Activated CD4-positive, alpha-beta T cell treated with anti-CD3 and anti-CD28 coated beads for 36 hours (primary cell): ENCODE measurements at regions of chr2 and their contacts with region 1.

Region 1: DNA sequence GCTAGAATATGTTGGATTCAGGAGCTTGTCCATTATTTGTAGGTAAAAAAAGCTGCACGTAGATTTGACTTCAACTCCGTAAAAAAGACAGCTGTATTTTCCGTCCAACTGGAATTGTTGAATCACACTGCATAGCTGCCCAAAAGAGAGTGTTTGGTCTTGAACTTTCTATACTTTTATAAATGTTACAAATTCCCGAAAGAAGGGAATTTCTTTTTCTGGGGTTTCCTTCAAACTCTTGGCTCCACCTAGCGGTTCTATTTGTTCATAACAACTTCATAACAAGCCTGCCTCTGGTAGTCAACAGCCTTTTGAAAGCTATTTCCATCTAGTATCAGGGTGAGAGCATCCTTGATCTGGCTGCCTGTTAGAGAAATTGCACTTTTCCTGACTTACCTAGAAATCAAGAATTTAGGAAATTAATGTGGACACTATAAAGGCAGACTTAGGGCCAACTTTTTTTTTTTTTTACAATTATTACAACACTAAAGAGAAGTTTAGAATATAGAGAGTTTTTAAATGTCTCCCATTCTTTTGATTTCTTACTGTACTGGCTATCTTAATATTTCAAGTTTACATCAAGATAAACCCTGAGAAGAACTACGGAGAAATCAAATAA is 48.1 kb downstream of the TMEM185B start:
- DNase-seq: no peak
- ATAC-seq: no peak
- H3K4me3 Mint-ChIP-seq: no peak overlapping the region
- H3K27ac Mint-ChIP-seq: peak overlapping the region; percentile 61
- H3K4me1 Mint-ChIP-seq: peaks cover 44% of the 10 kb centered on the region
- H3K27me3 Mint-ChIP-seq: no peaks in the 10 kb centered on the region

Region 2: DNA sequence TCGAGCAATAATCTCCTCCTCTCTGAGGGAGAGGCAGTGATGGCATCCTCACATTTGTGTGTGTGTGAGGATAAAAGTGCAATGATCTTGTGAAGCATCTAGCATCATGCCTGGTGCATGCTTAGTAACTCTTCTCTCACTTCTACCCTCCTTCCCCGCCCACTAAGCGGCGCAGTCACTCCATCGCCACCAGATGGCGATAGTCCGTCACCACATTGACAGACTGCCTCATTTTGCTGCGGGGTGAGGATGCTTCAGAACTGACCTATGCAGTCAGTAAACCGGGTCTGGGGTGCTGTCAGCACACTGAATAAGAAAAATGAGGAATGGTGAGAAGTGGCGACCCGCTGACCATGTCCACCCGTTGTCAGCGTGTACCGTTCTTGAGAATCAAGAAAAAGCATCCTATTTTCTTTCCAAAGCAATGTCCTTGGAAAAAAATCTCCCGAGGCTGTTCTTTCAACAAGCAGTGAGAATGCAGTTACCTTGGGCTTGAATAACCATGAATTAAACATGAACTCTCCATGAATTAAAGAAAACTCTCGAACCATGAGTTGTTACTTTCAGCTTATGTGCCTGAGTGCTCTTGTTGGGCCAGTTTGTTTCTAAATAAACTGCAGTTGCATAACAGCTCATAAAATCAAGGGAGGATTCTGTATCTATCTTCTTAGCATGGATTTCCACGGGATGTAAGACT is 533.4 kb before region 1 on chr2:
- CTCF ChIA-PET with region 1: interaction called, 40 read pairs
- POLR2A ChIA-PET with region 1: no interaction called
- intact Hi-C with region 1: loop called (anchors 1 kb)
- DNase-seq: peak; percentile 87
- ATAC-seq: peak; percentile 99
- H3K4me3 Mint-ChIP-seq: no peak overlapping the region
- H3K27ac Mint-ChIP-seq: no peak overlapping the region
- H3K4me1 Mint-ChIP-seq: peaks cover 2% of the 10 kb centered on the region
- H3K27me3 Mint-ChIP-seq: no peaks in the 10 kb centered on the region

Region 3: GRCh38 chr2:119753041-119753929 is 421.8 kb before region 1 on chr2:
- CTCF ChIA-PET with region 1: interaction called, 13 read pairs
- POLR2A ChIA-PET with region 1: interaction called, 9 read pairs
- intact Hi-C with region 1: loop called (anchors 1 kb)
- DNase-seq: peak; percentile 32
- ATAC-seq: peak; percentile 65
- H3K4me3 Mint-ChIP-seq: no peak overlapping the region
- H3K27ac Mint-ChIP-seq: no peak overlapping the region
- H3K4me1 Mint-ChIP-seq: peaks cover 15% of the 10 kb centered on the region
- H3K27me3 Mint-ChIP-seq: no peaks in the 10 kb centered on the region

Region 4: GRCh38 chr2:120012771-120013596 is 162.1 kb before region 1 on chr2 and contains the start of gene EPB41L5:
- CTCF ChIA-PET with region 1: interaction called, 11 read pairs
- POLR2A ChIA-PET with region 1: no interaction called
- intact Hi-C with region 1: loop called (anchors 1 to 5 kb)
- DNase-seq: peak; percentile 90
- ATAC-seq: peak; percentile 95
- H3K4me3 Mint-ChIP-seq: peak within 1 kb of the TSS; percentile 73
- H3K27ac Mint-ChIP-seq: peak within 1 kb of the TSS; percentile 66
- H3K4me1 Mint-ChIP-seq: peaks cover 19% of the 10 kb centered on the region
- H3K27me3 Mint-ChIP-seq: no peaks in the 10 kb centered on the region
- total RNA-seq, gene EPB41L5: 2.2 to 2.4 TPM

Region 5: GRCh38 chr2:120150040-120150482 is 25.0 kb before region 1 on chr2:
- CTCF ChIA-PET with region 1: interaction called, 12 read pairs
- POLR2A ChIA-PET with region 1: no interaction called
- intact Hi-C with region 1: no loop called
- DNase-seq: no peak
- ATAC-seq: no peak
- H3K4me3 Mint-ChIP-seq: no peak overlapping the region
- H3K27ac Mint-ChIP-seq: no peak overlapping the region
- H3K4me1 Mint-ChIP-seq: no peaks in the 10 kb centered on the region
- H3K27me3 Mint-ChIP-seq: no peaks in the 10 kb centered on the region

Region 6: DNA sequence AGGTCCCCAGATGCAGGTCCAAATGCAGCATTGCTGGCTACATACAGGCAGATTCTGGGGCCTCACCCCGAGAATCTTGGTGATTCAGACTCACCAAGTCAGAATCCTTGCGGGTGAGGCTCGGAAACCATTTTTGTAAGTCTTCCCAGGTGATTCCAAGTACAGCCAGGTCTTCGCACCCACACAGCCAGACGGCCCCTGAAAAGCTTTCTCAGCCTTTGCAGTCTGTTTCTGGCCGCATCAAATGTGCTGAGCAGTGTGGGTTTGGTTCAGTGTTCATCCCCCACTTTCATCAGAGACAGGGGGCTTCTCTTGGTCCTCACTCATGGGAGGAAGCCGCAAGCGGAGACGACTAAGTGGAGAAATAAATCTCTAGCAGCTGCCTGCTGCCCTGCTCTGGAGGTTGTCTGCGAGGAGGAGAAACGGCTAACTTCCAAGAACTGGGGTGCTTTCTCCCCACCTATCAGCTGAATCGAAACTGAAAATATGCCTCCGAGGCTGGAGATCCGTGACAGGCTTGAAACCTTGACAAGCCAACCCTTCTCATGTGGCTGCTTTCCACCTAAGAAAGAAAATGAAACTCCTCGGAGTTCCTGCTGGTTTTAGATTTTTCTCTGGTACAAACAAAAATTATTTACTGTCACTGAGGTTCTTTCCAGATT is 57.0 kb after region 1 on chr2:
- CTCF ChIA-PET with region 1: interaction called, 20 read pairs
- POLR2A ChIA-PET with region 1: interaction called, 3 read pairs
- intact Hi-C with region 1: loop called in 1 of 2 experiments (anchors 2 kb)
- DNase-seq: peak; percentile 83
- ATAC-seq: peak; percentile 88
- H3K4me3 Mint-ChIP-seq: peak overlapping the region; percentile 80
- H3K27ac Mint-ChIP-seq: peak overlapping the region; percentile 95
- H3K4me1 Mint-ChIP-seq: peaks cover 52% of the 10 kb centered on the region
- H3K27me3 Mint-ChIP-seq: no peaks in the 10 kb centered on the region

Region 7: GRCh38 chr2:120312861-120313694 is 138.0 kb after region 1 on chr2:
- CTCF ChIA-PET with region 1: interaction called, 68 read pairs
- POLR2A ChIA-PET with region 1: interaction called, 3 read pairs
- intact Hi-C with region 1: loop called in 1 of 2 experiments (anchors 1 kb)
- DNase-seq: peak; percentile 90
- ATAC-seq: peak; percentile 83
- H3K4me3 Mint-ChIP-seq: peak overlapping the region; percentile 53
- H3K27ac Mint-ChIP-seq: peak overlapping the region; percentile 29
- H3K4me1 Mint-ChIP-seq: peaks cover 26% of the 10 kb centered on the region
- H3K27me3 Mint-ChIP-seq: no peaks in the 10 kb centered on the region